ENCODE measurements at regions of chr9 and their contacts with region 1.

Region 1: GRCh38 chr9:109401168-109401989 is 80.5 kb upstream of the EPB41L4B start:
- DNase-seq: no peak
- ATAC-seq: peak; percentile 75
- H3K4me3 ChIP-seq: no peak overlapping the region
- H3K27ac ChIP-seq: 0 out of 2 replicates have a peak overlapping the region, but pooled peaks have one; percentile 10
- H3K4me1 ChIP-seq: peaks cover 30% of the 10 kb centered on the region
- H3K27me3 ChIP-seq: no peaks in the 10 kb centered on the region
- CTCF ChIP-seq: peak; percentile 83 to 91 (median 85)
- EP300 ChIP-seq: no peak
- POLR2A ChIP-seq: no peak
- RAD21 ChIP-seq: peak; percentile 92

Region 2: GRCh38 chr9:109192732-109193361 is 208.5 kb before region 1 on chr9:
- CTCF ChIA-PET with region 1: interaction called, 3 read pairs
- POLR2A ChIA-PET with region 1: no interaction called
- RAD21 ChIA-PET with region 1: no interaction called
- SMC1A ChIA-PET with region 1: no interaction called
- in situ Hi-C with region 1: no loop called
- intact Hi-C with region 1: loop called (anchors 2 kb)
- DNase-seq: no peak
- ATAC-seq: peak; percentile 54
- H3K4me3 ChIP-seq: no peak overlapping the region
- H3K27ac ChIP-seq: no peak overlapping the region
- H3K4me1 ChIP-seq: no peaks in the 10 kb centered on the region
- H3K27me3 ChIP-seq: no peaks in the 10 kb centered on the region
- CTCF ChIP-seq: peak; percentile 27 to 35 (median 33); a peak in 2 of 6 replicates
- EP300 ChIP-seq: no peak
- POLR2A ChIP-seq: no peak
- RAD21 ChIP-seq: peak; percentile 35; the same call in 1 of the 2 replicates

Region 3: DNA sequence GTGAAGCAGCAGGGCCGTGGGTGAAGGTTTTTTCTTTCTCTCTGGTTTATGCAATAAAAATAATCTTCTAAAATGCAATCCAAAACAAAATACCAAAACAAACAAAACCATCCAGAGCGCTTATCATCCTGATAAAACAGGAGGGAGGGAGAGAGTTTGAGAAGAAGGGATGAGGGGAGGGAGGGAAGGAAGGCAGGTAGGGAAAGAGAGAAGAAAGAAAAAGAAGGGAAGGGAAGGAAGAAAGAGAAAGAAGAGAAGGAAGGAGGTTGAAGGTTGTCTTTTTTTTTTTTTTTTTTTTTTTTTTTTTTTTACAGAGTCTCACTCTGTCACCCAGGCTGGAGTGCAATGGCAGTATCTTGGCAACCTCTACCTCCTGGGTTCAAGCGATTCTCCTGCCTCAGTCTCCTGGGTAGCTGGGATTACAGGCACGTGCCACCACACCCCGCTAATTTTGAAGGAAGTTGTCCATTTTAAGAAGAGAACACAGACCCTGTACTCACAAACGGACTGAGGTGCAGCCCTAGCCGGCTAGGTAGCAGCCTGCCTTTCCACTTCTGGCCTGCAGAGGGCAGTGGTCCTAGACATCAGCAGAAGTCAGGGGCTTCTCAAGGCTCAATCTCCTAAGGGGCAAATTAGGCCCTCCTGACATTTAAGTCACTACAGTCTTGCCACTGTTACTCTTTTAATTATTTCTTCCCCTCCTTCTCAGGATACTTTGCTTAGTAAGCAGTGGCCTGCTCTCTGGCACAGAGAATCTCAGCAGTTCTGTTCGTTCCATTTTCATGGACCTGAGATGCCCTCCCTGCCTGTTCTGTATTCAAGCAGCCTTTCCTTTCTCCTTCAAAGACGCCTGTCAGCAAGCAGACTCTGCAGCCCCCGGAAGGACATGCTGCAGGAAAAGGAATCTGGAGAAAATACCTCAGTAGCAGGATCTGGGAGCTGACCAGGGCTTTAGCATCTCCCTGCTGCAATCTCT is 156.9 kb before region 1 on chr9:
- CTCF ChIA-PET with region 1: interaction called, 6 read pairs
- POLR2A ChIA-PET with region 1: interaction called, 3 read pairs
- RAD21 ChIA-PET with region 1: interaction called, 5 read pairs
- SMC1A ChIA-PET with region 1: interaction called, 3 read pairs
- in situ Hi-C with region 1: loop called (anchors 5 kb)
- intact Hi-C with region 1: loop called (anchors 1 kb)
- DNase-seq: peak; percentile 25
- ATAC-seq: peak; percentile 98
- H3K4me3 ChIP-seq: no peak overlapping the region
- H3K27ac ChIP-seq: no peak overlapping the region
- H3K4me1 ChIP-seq: no peaks in the 10 kb centered on the region
- H3K27me3 ChIP-seq: peaks cover 0 to 2% of the 10 kb centered on the region in 2 experiments; a peak in 1 of 4 replicates
- CTCF ChIP-seq: peak; percentile 83 to 96 (median 95)
- EP300 ChIP-seq: no peak
- POLR2A ChIP-seq: no peak
- RAD21 ChIP-seq: peak; percentile 63

Region 4: DNA sequence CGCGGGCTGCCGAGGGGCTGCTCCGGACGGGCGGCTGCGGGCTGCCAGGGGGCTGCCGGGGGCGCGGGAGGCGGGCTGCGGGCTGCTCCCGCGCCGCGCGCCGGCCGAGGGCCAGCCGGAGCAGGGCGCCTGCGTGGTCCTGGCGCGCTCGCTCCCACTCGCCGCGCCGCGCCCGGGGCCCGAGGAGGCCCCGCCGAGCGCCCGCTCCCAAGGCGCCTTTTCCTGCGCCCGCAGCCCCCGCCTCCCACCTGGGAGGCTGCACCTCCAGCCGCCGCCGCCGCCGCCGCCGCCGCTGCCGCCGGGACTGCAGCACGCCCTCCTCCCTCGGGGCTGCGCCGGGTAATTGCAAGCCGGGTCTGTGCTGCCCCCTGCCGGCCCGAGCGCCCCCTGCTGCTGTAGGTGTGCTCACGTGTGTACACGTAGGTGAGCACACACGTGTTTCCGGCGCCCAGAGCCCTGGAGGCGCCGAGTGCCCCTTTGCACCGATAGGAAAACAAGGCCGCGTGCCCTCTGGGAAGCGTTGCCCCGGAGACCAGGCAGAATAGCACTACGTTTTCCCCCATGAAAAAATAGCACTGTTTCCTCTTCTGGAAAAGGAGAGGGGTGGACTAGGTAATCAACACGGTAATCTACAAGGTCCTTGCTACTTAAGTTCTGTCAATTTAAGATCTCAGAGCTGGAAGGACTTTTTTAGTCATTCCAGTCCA is 80.5 kb before region 1 on chr9 and contains the start of gene EPB41L4B:
- CTCF ChIA-PET with region 1: interaction called, 5 read pairs
- POLR2A ChIA-PET with region 1: no interaction called
- RAD21 ChIA-PET with region 1: no interaction called
- SMC1A ChIA-PET with region 1: interaction called, 3 read pairs
- in situ Hi-C with region 1: no loop called
- intact Hi-C with region 1: loop called (anchors 5 kb)
- DNase-seq: peak; percentile 19
- ATAC-seq: peak; percentile 100
- H3K4me3 ChIP-seq: no peak within 1 kb of the TSS; the same call in 1 of the 2 replicates
- H3K27ac ChIP-seq: no peak within 1 kb of the TSS
- H3K4me1 ChIP-seq: no peaks in the 10 kb centered on the region
- H3K27me3 ChIP-seq: peaks cover 5 to 6% of the 10 kb centered on the region in 2 experiments
- CTCF ChIP-seq: peak; percentile 83 to 92 (median 90)
- EP300 ChIP-seq: no peak
- POLR2A ChIP-seq: no peak
- RAD21 ChIP-seq: peak; percentile 80
- polyA plus RNA-seq, gene EPB41L4B: 0.04 to 0.13 TPM

Region 5: GRCh38 chr9:109381011-109381729 is 20.2 kb before region 1 on chr9:
- CTCF ChIA-PET with region 1: interaction called, 7 read pairs
- POLR2A ChIA-PET with region 1: no interaction called
- RAD21 ChIA-PET with region 1: interaction called, 7 read pairs
- SMC1A ChIA-PET with region 1: interaction called, 10 read pairs
- in situ Hi-C with region 1: no loop called
- intact Hi-C with region 1: loop called (anchors 1 kb)
- DNase-seq: no peak
- ATAC-seq: peak; percentile 77
- H3K4me3 ChIP-seq: no peak overlapping the region
- H3K27ac ChIP-seq: no peak overlapping the region
- H3K4me1 ChIP-seq: peaks cover 36% of the 10 kb centered on the region
- H3K27me3 ChIP-seq: peaks cover 0 to 2% of the 10 kb centered on the region in 2 experiments; a peak in 1 of 4 replicates
- CTCF ChIP-seq: no peak
- EP300 ChIP-seq: no peak
- POLR2A ChIP-seq: no peak
- RAD21 ChIP-seq: no peak

Region 6: DNA sequence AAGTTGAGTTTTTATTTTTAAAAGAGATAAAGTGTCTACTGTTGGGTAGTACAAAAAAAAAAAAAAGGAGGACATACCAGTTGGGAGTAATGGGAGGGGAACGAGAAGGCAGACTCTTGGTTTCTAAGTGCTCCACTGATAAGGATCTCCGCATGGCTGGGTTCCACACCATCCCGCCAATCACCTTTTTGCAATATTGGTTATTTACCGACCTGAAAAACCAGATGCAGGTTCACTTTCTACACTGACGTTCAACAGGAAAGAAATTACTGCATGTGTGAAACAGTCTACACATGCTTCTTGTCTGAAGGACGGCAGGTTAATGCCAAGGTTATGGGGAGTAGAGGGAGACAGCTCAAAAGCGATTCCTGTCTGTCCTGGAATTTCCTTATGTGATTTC is 21.3 kb after region 1 on chr9:
- CTCF ChIA-PET with region 1: interaction called, 12 read pairs
- POLR2A ChIA-PET with region 1: interaction called, 5 read pairs
- RAD21 ChIA-PET with region 1: interaction called, 12 read pairs
- SMC1A ChIA-PET with region 1: interaction called, 19 read pairs
- in situ Hi-C with region 1: no loop called
- intact Hi-C with region 1: no loop called
- DNase-seq: peak; percentile 91
- ATAC-seq: peak; percentile 83
- H3K4me3 ChIP-seq: no peak overlapping the region
- H3K27ac ChIP-seq: peak overlapping the region; percentile 23; the same call in 1 of the 2 replicates
- H3K4me1 ChIP-seq: peaks cover 44% of the 10 kb centered on the region
- H3K27me3 ChIP-seq: no peaks in the 10 kb centered on the region
- CTCF ChIP-seq: no peak
- EP300 ChIP-seq: peak; percentile 63 to 68; a peak in 3 of 4 replicates
- POLR2A ChIP-seq: no peak
- RAD21 ChIP-seq: no peak

Measured in GM12878 (cell line).